KBM-7 (cell line): ENCODE measurements at regions of chr1 and their contacts with region 1.

Region 1: DNA sequence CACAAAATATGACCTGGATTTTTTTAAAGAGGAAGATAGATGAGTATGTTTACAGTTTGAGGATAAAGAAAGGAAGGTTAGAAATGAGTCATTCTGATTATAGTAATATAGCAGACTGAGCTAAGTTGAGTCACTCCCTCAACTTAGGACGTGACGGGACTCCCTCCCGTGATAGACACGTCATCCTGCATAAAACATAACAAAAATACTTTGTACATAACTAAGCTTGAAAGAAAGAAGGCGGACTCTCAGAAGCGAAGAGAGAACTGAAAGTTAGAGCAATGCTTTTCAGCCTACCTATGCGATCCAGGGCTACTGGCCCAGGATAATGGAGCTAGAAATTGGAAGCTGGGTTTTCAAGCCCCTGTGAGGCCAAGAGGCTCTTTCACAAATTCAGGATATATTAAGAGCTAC is 53.0 kb upstream of the DESI2 start:
- DNase-seq: no peak

Region 2: DNA sequence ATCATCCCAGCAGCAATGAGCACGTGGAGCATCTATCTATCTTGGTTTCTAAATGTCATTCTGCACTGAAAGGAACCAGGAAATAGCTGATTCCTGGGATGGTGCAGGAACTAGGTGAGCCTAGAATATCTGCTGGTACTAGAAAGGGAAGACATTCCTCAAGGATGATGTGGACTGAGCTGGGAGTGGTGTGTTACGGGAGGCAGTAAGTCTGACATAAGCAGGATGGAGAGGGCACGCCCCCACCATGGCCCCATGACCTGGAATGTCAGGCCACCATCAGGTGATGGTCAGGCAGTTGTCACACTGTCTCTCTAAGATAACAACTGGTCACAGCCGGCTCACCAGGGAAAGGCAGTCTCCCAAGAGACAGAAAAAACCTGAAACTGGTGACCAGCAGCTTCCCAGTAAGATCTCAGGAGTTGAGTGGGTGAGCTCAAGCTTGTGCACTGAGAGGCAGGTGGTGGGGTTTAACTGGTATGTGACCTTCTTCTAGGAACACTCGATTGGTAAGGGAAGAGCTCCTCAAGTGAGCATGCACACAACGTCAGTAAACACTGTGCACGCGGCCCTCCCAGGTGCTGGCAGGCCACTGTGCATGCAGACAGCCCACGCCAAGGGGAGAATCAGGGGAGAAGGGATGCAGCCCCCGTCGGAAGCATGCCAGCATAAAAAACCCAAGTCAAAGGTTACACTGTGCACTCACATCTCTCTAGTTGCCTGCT is 296.9 kb before region 1 on chr1:
- in situ Hi-C with region 1: no loop called
- DNase-seq: no peak

Region 3: DNA sequence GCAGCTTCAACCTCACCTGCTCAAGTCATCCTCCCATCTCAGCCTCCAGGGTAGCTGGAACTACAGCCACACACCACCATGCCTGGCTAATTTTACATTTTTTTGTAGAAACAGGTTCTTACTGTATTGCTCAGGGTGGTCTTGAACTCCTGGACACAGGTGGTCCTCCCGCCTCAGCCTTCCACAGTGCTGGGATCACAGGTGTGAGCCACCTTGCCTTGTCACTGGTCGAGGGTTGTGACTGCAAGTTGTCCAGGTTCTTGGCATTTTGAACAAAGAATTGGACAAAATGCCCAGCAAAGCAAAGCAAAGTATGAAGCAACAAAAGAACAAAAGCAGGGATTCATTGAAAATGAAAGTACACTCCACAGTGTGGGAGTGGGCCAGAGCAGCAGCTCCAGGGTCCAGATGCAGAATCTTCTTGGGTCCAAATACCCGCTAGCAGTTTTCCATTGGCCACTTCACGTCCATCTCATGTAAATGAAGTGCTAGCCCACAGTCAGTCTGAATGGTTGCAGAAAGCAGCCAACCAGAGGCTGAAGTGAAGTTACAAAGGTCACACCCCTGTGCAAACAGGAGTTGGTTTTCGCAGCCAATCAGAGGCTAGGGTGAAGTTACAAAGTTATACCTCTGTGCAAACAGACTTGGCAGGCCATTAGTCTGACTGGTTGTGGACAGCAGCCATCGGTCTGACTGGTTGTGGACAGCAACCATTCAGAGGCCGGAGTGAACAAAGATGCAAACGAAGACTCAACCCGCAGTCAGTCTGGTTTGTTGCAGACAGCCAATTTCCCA is 445.3 kb after region 1 on chr1:
- in situ Hi-C with region 1: loop called (anchors 25 kb)
- DNase-seq: no peak